ENCODE measurements at regions of chr2 and their contacts with region 1.

Region 1: GRCh38 chr2:112836695-112837117 is at the start of gene IL1B:
- DNase-seq: peak; percentile 81 to 91 (median 91)
- H3K4me3 ChIP-seq: peak within 1 kb of the TSS; percentile 67 to 94 (median 85)
- H3K27ac ChIP-seq: peak within 1 kb of the TSS; percentile 75 to 88
- H3K4me1 ChIP-seq: peaks cover 67 to 93% (median 80%) of the 10 kb centered on the region in 4 experiments
- H3K27me3 ChIP-seq: no peaks in the 10 kb centered on the region

Region 2: GRCh38 chr2:112784199-112785189 is 52.2 kb before region 1 on chr2 and contains the start of gene IL1A:
- CTCF ChIA-PET with region 1: interaction called, 34 read pairs
- POLR2A ChIA-PET with region 1: no interaction called
- DNase-seq: peak in 2 of 3 donors; percentile 63 to 75
- H3K4me3 ChIP-seq: peak within 1 kb of the TSS in 2 of 7 experiments; percentile 40 to 44
- H3K27ac ChIP-seq: no peak within 1 kb of the TSS
- H3K4me1 ChIP-seq: peaks cover 15 to 50% (median 26%) of the 10 kb centered on the region in 4 experiments
- H3K27me3 ChIP-seq: no peaks in the 10 kb centered on the region

Region 3: DNA sequence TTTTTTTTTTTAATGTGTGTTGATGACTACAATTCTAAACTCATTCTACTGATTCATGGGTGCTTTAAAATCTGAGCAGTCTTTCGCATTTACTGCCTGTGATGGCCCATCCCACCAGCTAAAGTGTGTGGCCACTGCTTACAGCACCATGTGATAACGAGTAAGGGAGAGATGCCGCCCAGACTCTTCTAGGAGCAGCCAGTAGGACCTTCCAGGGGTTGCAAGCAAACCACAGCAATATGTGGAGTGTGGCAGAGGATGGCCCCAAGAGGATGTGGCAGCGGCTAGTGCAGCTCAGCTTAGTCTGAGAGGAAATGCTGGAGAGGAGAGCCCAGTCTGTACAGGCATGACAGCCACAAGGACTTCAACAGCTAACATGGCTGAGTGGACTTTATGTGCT is 15.0 kb before region 1 on chr2:
- CTCF ChIA-PET with region 1: interaction called, 12 read pairs
- POLR2A ChIA-PET with region 1: interaction called, 6 read pairs
- DNase-seq: peak in 2 of 3 donors; percentile 76 to 83
- H3K4me3 ChIP-seq: peak overlapping the region in 1 of 7 experiments; percentile 8
- H3K27ac ChIP-seq: no peak overlapping the region
- H3K4me1 ChIP-seq: peaks cover 0 to 37% (median 29%) of the 10 kb centered on the region in 4 experiments
- H3K27me3 ChIP-seq: no peaks in the 10 kb centered on the region

Region 4: GRCh38 chr2:112848833-112849232 is 12.1 kb after region 1 on chr2:
- CTCF ChIA-PET with region 1: interaction called, 10 read pairs
- POLR2A ChIA-PET with region 1: no interaction called
- DNase-seq: no peak
- H3K4me3 ChIP-seq: no peak overlapping the region
- H3K27ac ChIP-seq: no peak overlapping the region
- H3K4me1 ChIP-seq: no peaks in the 10 kb centered on the region
- H3K27me3 ChIP-seq: no peaks in the 10 kb centered on the region

Region 5: DNA sequence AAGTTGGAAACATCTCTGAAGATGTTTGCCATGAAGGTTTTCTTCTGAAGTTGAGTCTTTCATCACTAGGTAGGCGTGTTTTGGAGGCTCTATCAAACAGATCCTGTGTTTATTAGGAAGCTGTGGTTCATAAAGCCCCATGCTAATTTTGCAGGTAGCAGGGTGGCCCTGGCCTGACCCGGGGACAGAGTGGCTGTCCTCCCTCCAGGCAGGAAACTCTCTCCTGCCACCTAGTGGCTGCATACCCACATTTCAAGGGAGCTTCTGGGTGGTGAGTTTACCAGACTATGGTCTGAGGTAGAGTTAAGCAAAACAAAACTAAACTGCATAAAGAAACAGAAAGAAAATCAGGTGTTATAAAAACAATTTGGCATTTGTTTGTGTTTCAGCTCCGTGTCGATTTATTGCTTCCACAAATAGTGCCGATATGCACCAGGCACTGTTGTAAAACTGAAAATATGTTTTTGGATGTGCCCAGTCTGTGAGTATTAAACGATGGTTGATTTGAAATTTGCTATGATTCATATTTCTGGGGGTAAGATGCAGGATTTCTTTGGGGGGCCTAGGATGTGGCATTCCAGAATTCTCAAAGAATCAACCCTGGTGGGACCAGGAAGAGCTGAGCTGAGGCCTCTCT is 48.3 kb after region 1 on chr2:
- CTCF ChIA-PET with region 1: interaction called, 14 read pairs
- POLR2A ChIA-PET with region 1: no interaction called
- DNase-seq: peak; percentile 44 to 74 (median 70)
- H3K4me3 ChIP-seq: peak overlapping the region in 2 of 7 experiments; percentile 9 to 26
- H3K27ac ChIP-seq: no peak overlapping the region
- H3K4me1 ChIP-seq: peaks cover 11 to 58% (median 40%) of the 10 kb centered on the region in 4 experiments
- H3K27me3 ChIP-seq: no peaks in the 10 kb centered on the region